ENCODE measurements at regions of chr1 and their contacts with region 1.

Region 1: GRCh38 chr1:84478876-84479868 is at the start of gene RPF1:
- DNase-seq: peak; percentile 71 to 74
- ATAC-seq: peak; percentile 95 to 98 (median 97)
- H3K4me3 ChIP-seq: peak within 1 kb of the TSS; percentile 54 to 88 (median 78)
- H3K27ac ChIP-seq: peak within 1 kb of the TSS; percentile 9 to 94 (median 86)
- H3K4me1 ChIP-seq: peaks cover 0 to 35% (median 23%) of the 10 kb centered on the region in 9 donors
- H3K27me3 ChIP-seq: peaks cover 0 to 42% (median 36%) of the 10 kb centered on the region in 7 donors
- CTCF ChIP-seq: no peak
- total RNA-seq, gene RPF1: 28.0 to 38.9 (median 32.0) TPM

Region 2: GRCh38 chr1:84573967-84574842 is 95.0 kb after region 1 on chr1 and contains the start of gene CTBS:
- intact Hi-C with region 1: loop called in 1 of 10 experiments (anchors 5 kb)
- DNase-seq: peak; percentile 90 to 92
- ATAC-seq: peak; percentile 96 to 100 (median 98)
- H3K4me3 ChIP-seq: peak within 1 kb of the TSS; percentile 53 to 88 (median 74)
- H3K27ac ChIP-seq: peak within 1 kb of the TSS; percentile 88 to 100 (median 98)
- H3K4me1 ChIP-seq: peaks cover 0 to 41% (median 14%) of the 10 kb centered on the region in 9 donors
- H3K27me3 ChIP-seq: no peaks in the 10 kb centered on the region
- CTCF ChIP-seq: no peak
- total RNA-seq, gene CTBS: 5.8 to 13.2 (median 7.3) TPM

Region 3: GRCh38 chr1:84823511-84823910 is 344.3 kb after region 1 on chr1:
- intact Hi-C with region 1: no loop called
- DNase-seq: no peak
- ATAC-seq: no peak
- H3K4me3 ChIP-seq: no peak overlapping the region
- H3K27ac ChIP-seq: no peak overlapping the region
- H3K4me1 ChIP-seq: peaks cover 0 to 4% (median 0%) of the 10 kb centered on the region in 9 donors
- H3K27me3 ChIP-seq: no peaks in the 10 kb centered on the region
- CTCF ChIP-seq: no peak

Measured in heart right ventricle (tissue), 16 donors.